Activated naive CD4-positive, alpha-beta T cell treated with anti-CD3 and anti-CD28 coated beads for 36 hours (primary cell): ENCODE measurements at regions of chr5 and their contacts with region 1.

Region 1: DNA sequence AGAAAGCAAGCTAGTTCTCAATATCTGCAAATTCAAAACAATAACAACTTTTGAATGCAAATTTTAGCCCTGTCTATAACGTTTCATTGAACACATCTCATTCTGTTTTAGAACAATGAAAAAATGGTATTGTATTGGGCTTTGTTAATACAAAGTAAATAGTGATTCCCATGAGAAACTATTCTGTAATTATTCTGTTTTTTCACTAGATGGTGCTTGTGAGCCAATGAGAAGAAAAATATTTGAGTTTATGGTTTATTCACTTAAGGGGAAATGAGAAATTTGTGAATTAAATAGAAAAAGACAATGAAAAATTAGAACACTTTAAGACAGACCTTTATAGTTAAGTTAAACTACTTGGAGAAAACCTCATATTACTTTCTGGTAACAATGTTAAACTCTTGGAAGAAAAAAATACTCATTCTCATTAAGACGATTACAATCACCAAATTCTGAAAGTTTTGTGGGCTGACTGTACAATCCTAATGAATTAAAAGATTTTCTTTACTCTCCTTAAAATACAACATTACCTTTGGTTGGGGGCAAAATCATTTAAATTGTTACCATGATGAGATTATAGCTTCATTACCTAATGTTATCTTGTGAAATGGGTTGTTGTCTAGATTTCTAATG is 127.0 kb downstream of the NNT start:
- DNase-seq: no peak
- H3K4me3 Mint-ChIP-seq: no peak overlapping the region
- H3K27ac Mint-ChIP-seq: no peak overlapping the region
- H3K4me1 Mint-ChIP-seq: no peaks in the 10 kb centered on the region
- H3K27me3 Mint-ChIP-seq: no peaks in the 10 kb centered on the region

Region 2: DNA sequence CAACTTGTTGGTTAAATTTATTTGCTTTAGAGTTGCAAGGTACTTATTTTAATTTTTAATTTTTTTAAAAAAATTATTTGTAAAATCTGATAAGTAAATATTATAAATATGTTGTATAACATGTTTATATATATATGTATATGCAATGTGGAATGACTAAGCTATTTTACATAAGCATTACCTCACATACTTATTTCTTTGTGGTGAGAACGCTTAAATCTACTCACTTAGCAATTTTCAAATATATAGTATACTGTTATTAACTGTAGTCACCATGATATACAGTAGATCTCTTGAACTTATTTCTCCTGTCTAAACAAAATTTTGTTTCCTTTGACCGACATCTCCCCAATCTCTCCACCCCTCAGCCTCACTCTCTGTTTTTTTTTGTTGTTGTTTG is 20.8 kb after region 1 on chr5:
- CTCF ChIA-PET with region 1: no interaction called
- intact Hi-C with region 1: loop called (anchors 1 kb)
- DNase-seq: no peak
- H3K4me3 Mint-ChIP-seq: no peak overlapping the region
- H3K27ac Mint-ChIP-seq: no peak overlapping the region
- H3K4me1 Mint-ChIP-seq: no peaks in the 10 kb centered on the region
- H3K27me3 Mint-ChIP-seq: no peaks in the 10 kb centered on the region

Region 3: DNA sequence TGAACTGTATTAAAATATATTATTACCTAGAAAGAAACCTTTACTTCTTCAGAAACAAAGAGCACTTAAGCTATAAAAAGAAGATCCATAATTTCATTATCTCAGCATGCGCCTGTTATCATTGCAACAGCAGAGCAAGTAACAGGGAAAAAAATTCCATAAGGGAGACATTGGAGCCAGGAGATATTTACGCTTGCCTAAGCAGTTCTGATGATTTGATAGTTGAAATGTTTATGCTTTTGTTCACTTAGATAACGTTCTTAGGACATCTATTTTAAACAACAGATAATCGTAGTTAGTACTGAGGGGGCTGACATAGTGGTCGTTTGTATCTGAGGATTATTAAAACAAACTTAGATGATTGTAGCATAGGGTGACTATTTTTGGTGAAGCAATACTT is 125.5 kb after region 1 on chr5:
- CTCF ChIA-PET with region 1: no interaction called
- intact Hi-C with region 1: loop called (anchors 5 kb)
- DNase-seq: no peak
- H3K4me3 Mint-ChIP-seq: no peak overlapping the region
- H3K27ac Mint-ChIP-seq: no peak overlapping the region
- H3K4me1 Mint-ChIP-seq: no peaks in the 10 kb centered on the region
- H3K27me3 Mint-ChIP-seq: no peaks in the 10 kb centered on the region

Region 4: GRCh38 chr5:44089424-44090144 is 359.6 kb after region 1 on chr5:
- CTCF ChIA-PET with region 1: no interaction called
- intact Hi-C with region 1: loop called (anchors 10 kb)
- DNase-seq: no peak
- H3K4me3 Mint-ChIP-seq: no peak overlapping the region
- H3K27ac Mint-ChIP-seq: no peak overlapping the region
- H3K4me1 Mint-ChIP-seq: no peaks in the 10 kb centered on the region
- H3K27me3 Mint-ChIP-seq: no peaks in the 10 kb centered on the region

Region 5: DNA sequence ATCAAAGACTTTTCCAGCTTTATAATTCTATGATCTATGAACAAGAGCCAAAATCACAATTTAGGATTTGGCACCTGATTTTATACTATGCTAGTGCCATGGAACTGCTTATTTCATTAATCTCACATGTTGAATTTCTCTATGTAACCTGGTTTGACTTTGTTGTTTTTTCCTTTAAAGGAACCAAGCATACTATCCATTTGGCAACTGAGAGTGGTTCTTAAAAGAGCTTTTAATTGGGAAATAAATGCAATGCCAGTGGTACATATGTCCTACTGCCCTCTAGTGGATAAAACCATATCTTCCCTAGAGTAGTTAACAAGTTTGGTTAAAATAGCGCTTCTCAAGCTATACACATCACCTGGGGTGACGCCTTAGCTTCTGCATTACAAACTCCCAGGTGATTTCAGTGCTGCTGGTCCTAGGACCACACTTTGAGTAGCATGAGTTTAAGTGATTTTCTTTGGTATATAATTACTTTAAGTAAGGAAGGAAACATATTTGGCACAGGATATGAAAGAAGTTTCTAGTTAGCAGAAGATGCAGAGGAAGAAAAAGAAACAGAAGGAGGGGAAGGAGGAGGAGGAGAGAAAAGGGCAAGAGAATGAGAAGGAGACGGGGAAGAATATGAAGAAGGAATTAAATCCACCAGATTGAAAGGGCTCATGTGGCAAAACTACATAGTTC is 602.5 kb after region 1 on chr5:
- CTCF ChIA-PET with region 1: interaction called, 3 read pairs
- intact Hi-C with region 1: loop called (anchors 1 kb)
- DNase-seq: no peak
- H3K4me3 Mint-ChIP-seq: no peak overlapping the region
- H3K27ac Mint-ChIP-seq: no peak overlapping the region
- H3K4me1 Mint-ChIP-seq: no peaks in the 10 kb centered on the region
- H3K27me3 Mint-ChIP-seq: no peaks in the 10 kb centered on the region

Region 6: DNA sequence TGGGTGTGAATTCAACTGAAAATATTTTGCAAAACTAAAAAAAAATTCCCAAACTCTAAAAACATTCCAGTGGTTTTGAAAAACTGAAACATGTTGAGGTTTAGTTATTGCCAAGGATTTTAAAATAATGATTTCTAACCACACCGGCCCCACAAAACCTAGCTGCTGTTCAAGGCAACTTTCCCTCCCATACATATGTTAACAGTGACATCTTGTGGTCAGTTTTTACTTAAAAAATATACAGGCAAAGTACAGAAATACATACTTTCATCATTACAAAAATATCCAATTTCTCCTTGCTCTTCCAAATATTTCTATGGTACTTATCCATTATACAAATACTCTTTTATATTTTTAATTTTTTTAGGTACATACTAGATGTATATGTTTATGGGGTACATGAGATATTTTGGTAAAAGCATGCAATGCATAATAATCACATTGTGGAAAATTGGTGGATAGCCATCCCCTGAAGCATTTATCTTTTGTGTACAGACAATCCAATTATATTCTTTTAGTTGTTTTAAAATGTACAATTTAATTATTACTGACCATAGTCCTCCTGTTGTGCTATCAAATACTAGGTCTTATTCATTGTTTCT is 1044.4 kb after region 1 on chr5:
- CTCF ChIA-PET with region 1: no interaction called
- intact Hi-C with region 1: loop called (anchors 1 kb)
- DNase-seq: no peak
- H3K4me3 Mint-ChIP-seq: no peak overlapping the region
- H3K27ac Mint-ChIP-seq: no peak overlapping the region
- H3K4me1 Mint-ChIP-seq: no peaks in the 10 kb centered on the region
- H3K27me3 Mint-ChIP-seq: peaks cover 9% of the 10 kb centered on the region